ENCODE measurements at regions of chr11 and their contacts with region 1.

Region 1: GRCh38 chr11:86477495-86478155 is 102.9 kb downstream of the CCDC81 start:
- DNase-seq: no peak
- ATAC-seq: peak in 5 of 8 donors; percentile 12 to 21 (median 19)
- H3K4me3 ChIP-seq: no peak overlapping the region
- H3K27ac ChIP-seq: peak overlapping the region; percentile 19 to 89 (median 43)
- H3K4me1 ChIP-seq: peaks cover 17 to 73% (median 59%) of the 10 kb centered on the region in 9 donors
- H3K27me3 ChIP-seq: no peaks in the 10 kb centered on the region
- CTCF ChIP-seq: no peak

Region 2: DNA sequence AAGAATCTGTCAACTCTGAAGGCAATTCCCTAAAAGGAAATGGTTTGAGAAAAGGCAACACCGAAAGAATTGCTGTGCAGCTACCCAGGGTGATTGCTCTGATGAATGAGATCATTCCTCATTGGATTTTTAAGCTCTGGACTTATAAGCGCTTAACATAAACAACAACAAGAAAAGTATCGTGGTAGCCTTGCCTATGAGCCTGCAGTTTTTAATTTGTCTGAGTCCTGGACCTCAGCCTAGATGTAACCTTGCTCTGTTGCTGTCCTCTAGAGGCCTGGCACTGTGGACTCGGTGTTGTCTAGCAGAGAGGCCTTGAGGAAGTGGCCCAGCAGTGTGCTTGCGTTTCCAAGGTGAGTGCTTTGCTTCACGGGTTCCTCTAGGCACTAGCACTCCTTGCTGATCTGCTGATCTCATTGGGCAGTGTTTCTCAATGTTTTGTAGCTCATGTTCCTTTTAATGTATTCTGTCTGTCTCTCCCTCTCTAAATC is 82.5 kb before region 1 on chr11:
- intact Hi-C with region 1: no loop called
- DNase-seq: no peak
- ATAC-seq: peak in 4 of 8 donors; percentile 39 to 77 (median 58)
- H3K4me3 ChIP-seq: no peak overlapping the region
- H3K27ac ChIP-seq: no peak overlapping the region
- H3K4me1 ChIP-seq: peaks cover 0 to 4% (median 0%) of the 10 kb centered on the region in 9 donors
- H3K27me3 ChIP-seq: no peaks in the 10 kb centered on the region
- CTCF ChIP-seq: no peak

Region 3: GRCh38 chr11:86551286-86552092 is 73.9 kb after region 1 on chr11:
- intact Hi-C with region 1: loop called in 3 of 10 experiments (anchors 5 kb)
- DNase-seq: peak in 1 of 2 donors; percentile 40
- ATAC-seq: peak in 7 of 8 donors; percentile 34 to 71 (median 66)
- H3K4me3 ChIP-seq: no peak overlapping the region
- H3K27ac ChIP-seq: peak overlapping the region; percentile 26 to 84 (median 70)
- H3K4me1 ChIP-seq: peaks cover 7 to 61% (median 33%) of the 10 kb centered on the region in 9 donors
- H3K27me3 ChIP-seq: no peaks in the 10 kb centered on the region
- CTCF ChIP-seq: no peak

Region 4: GRCh38 chr11:86559311-86559945 is 81.8 kb after region 1 on chr11:
- intact Hi-C with region 1: loop called in 3 of 10 experiments (anchors 5 kb)
- DNase-seq: peak; percentile 32 to 68
- ATAC-seq: peak; percentile 72 to 89 (median 84)
- H3K4me3 ChIP-seq: no peak overlapping the region
- H3K27ac ChIP-seq: peak overlapping the region; percentile 69 to 91 (median 84)
- H3K4me1 ChIP-seq: peaks cover 4 to 45% (median 32%) of the 10 kb centered on the region in 9 donors
- H3K27me3 ChIP-seq: no peaks in the 10 kb centered on the region
- CTCF ChIP-seq: no peak

Region 5: GRCh38 chr11:86592659-86593451 is 115.2 kb after region 1 on chr11:
- intact Hi-C with region 1: loop called in 1 of 10 experiments (anchors 10 kb)
- DNase-seq: peak in 1 of 2 donors; percentile 58
- ATAC-seq: peak in 7 of 8 donors; percentile 11 to 76 (median 50)
- H3K4me3 ChIP-seq: no peak overlapping the region
- H3K27ac ChIP-seq: peak overlapping the region in 1 of 10 donors; percentile 17
- H3K4me1 ChIP-seq: peaks cover 9 to 64% (median 38%) of the 10 kb centered on the region in 9 donors
- H3K27me3 ChIP-seq: no peaks in the 10 kb centered on the region
- CTCF ChIP-seq: no peak

Region 6: GRCh38 chr11:86798988-86799387 is 321.4 kb after region 1 on chr11:
- intact Hi-C with region 1: no loop called
- DNase-seq: no peak
- ATAC-seq: no peak
- H3K4me3 ChIP-seq: no peak overlapping the region
- H3K27ac ChIP-seq: no peak overlapping the region
- H3K4me1 ChIP-seq: peaks cover 0 to 33% (median 15%) of the 10 kb centered on the region in 9 donors
- H3K27me3 ChIP-seq: peaks cover 0 to 42% (median 0%) of the 10 kb centered on the region in 7 donors
- CTCF ChIP-seq: no peak

Measured in heart right ventricle (tissue), 16 donors.